Ovary (tissue), 10 donors: ENCODE measurements at regions of chr2 and their contacts with region 1.

Region 1: GRCh38 chr2:191555092-191555742 is 122.7 kb upstream of the NABP1 start:
- DNase-seq: peak; percentile 74 to 88 (median 82)
- H3K4me3 ChIP-seq: no peak overlapping the region
- H3K27ac ChIP-seq: no peak overlapping the region
- H3K4me1 ChIP-seq: no peaks in the 10 kb centered on the region
- H3K27me3 ChIP-seq: no peaks in the 10 kb centered on the region
- CTCF ChIP-seq: peak in 2 of 3 donors; percentile 61 to 71
- EP300 ChIP-seq: no peak
- POLR2A ChIP-seq: no peak

Region 2: DNA sequence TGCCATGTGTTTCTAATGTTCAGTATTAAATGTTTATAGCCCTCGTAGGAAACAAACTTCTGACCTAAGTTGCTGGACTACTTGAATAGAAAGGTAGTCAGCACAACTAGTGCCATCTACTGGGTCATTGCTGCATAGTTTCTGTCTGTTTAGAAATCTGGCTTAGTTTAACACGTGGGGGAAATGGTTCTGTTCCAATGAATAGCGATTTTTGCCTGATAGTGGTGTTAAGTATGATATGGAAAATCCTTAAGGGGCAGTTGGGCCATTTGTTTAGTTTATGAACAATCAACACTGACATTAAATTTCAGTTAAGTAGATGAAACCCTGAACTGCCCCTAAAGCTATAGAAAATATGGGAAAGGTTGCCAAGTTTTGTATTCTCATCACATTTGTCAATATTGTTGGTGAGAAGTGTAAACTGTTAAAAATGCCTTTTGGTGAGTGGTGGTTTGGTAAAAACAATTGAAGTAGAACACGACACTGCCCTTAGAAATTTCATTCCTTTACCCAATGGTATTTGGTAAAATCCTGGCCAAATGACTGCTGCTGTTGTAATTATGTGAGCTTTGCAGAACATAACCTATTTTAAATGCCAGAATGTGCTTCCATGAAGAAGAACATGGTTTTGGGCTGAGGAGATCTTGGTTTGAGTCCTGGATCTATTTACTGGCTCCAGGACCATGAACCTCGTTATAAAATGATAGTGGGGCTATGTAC is 136.0 kb after region 1 on chr2:
- intact Hi-C with region 1: loop called in 3 of 4 experiments (anchors 5 to 10 kb)
- DNase-seq: peak in 1 of 5 donors; percentile 42
- H3K4me3 ChIP-seq: no peak overlapping the region
- H3K27ac ChIP-seq: no peak overlapping the region
- H3K4me1 ChIP-seq: no peaks in the 10 kb centered on the region
- H3K27me3 ChIP-seq: no peaks in the 10 kb centered on the region
- CTCF ChIP-seq: peak; percentile 25 to 41 (median 32)
- EP300 ChIP-seq: no peak
- POLR2A ChIP-seq: no peak

Region 3: GRCh38 chr2:191800874-191801273 is 245.7 kb after region 1 on chr2:
- intact Hi-C with region 1: no loop called
- DNase-seq: no peak
- H3K4me3 ChIP-seq: no peak overlapping the region
- H3K27ac ChIP-seq: no peak overlapping the region
- H3K4me1 ChIP-seq: no peaks in the 10 kb centered on the region
- H3K27me3 ChIP-seq: no peaks in the 10 kb centered on the region
- CTCF ChIP-seq: no peak
- EP300 ChIP-seq: no peak
- POLR2A ChIP-seq: no peak

Region 4: DNA sequence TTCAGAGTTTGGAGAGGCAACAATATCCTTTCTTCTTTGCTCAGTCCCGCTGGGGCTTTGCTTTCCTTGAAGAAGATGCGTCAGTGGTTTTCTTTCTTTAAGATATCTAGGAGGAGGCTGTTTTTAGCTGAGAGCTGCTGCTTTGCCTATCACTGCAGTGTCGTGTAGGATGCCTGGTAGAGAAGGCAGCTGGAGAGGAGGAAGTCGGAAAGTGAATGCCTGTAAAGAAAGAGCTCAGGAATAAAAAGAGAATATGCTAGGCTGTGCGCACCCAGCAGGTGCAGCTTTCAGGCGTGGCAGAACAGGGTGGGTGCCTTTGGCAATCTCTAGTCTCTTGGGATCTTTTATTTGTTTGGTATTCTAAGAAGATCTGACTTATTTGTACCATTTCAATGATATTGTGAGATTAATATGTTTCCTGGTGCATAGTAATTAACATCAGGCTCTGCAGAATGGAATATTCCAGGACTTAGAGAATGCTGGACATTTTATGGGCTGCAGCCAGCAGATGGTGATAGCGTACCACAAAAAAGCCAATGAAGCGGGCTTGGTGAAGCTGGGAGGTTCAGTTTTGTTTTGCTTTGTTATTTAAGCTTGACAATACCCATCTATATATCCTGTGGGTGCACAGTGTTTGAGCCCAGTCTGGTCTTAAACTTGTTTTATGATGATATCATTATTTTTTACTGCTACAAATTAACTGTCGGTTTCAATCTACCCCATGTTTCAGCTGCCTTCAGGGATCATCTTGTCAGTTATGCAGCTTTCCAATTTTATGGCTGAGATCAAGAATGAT is 256.8 kb after region 1 on chr2:
- intact Hi-C with region 1: loop called in 1 of 4 experiments (anchors 5 kb)
- DNase-seq: peak; percentile 49 to 76 (median 75)
- H3K4me3 ChIP-seq: no peak overlapping the region
- H3K27ac ChIP-seq: no peak overlapping the region
- H3K4me1 ChIP-seq: no peaks in the 10 kb centered on the region
- H3K27me3 ChIP-seq: no peaks in the 10 kb centered on the region
- CTCF ChIP-seq: peak; percentile 68 to 81 (median 74)
- EP300 ChIP-seq: no peak
- POLR2A ChIP-seq: no peak

Region 5: DNA sequence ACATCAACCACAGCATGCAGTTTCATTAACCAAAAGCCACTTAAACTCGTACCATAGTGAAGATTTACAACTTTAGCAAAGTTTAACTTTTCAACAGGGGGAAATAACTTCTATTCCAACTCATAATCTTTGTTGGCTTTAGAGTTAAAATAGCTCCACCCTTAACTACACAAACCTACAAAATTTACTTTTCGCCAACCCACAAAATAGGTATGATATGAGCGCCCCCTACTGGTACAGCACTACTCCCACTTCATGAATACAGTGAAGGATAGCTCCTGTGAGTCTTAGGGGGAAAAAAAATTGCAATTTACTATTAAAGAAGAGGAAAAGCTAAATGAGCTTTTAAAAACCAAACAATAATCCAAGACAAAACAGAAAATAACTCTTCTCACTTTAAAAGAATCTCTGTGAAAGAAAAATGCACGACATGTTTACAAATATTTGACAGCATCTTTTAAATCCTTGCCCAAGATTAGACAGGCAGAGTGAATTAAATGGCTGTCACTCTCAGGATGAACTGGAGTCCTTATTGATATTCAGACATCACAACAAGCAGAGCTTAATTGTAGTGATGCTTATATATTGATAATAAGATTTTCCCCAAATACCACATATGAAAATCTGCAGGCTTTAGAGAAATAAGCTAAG is 607.3 kb after region 1 on chr2:
- intact Hi-C with region 1: loop called in 2 of 4 experiments (anchors 10 kb)
- DNase-seq: peak; percentile 38 to 79 (median 55)
- H3K4me3 ChIP-seq: no peak overlapping the region
- H3K27ac ChIP-seq: no peak overlapping the region
- H3K4me1 ChIP-seq: no peaks in the 10 kb centered on the region
- H3K27me3 ChIP-seq: no peaks in the 10 kb centered on the region
- CTCF ChIP-seq: peak; percentile 73 to 95 (median 95)
- EP300 ChIP-seq: no peak
- POLR2A ChIP-seq: no peak